ENCODE measurements at regions of chr2 and their contacts with region 1.

Region 1: DNA sequence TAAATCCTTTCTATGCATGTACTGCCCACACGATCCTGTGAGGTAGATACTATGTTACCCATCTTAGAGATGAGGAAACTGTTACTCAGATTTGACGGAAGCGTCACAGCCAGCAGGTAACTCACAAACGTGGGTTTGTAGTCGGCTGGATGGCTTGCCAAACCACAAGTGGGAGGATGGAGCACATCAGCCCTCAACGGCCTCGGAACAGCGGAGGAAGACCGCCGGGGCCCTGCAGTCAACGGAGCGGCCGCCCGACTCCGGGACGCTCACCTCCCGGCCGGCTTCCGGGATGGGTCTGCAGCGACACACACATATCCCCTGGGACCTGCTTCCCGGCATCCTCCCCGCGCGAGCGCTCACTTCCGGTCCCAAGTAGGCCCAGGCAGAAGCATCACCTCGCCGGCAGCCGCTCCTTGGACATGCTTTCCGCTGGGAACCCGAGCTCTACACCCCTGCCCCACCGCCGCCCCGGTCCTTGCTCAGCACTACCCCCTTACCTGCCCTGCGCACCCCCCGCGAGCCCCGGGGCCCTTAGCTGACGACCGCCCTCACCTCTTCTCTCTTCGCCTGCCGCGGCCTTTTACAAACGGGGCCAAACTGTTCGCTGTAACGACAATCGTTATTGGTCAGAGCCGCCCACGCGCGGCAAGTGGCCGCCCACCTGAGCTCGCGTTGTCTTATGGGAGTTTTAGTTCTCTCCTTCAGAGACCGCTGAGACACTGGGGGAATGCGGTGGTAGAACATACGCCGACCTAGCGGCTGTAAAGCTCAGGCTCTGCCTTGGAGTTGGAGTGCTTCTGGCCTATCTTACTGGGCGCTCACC is at the start of gene C2orf42:
- DNase-seq: peak; percentile 93 to 97
- ATAC-seq: peak; percentile 97 to 99 (median 98)
- H3K4me3 ChIP-seq: peak within 1 kb of the TSS; percentile 71 to 91 (median 76)
- H3K27ac ChIP-seq: peak within 1 kb of the TSS; percentile 83 to 95 (median 92)
- H3K4me1 ChIP-seq: peaks cover 0 to 15% (median 4%) of the 10 kb centered on the region in 9 donors
- H3K27me3 ChIP-seq: peaks cover 0 to 3% (median 0%) of the 10 kb centered on the region in 7 donors
- CTCF ChIP-seq: peak in 3 of 9 donors; percentile 17 to 32 (median 25)
- total RNA-seq, gene C2orf42: 7.3 to 15.5 (median 9.7) TPM

Region 2: DNA sequence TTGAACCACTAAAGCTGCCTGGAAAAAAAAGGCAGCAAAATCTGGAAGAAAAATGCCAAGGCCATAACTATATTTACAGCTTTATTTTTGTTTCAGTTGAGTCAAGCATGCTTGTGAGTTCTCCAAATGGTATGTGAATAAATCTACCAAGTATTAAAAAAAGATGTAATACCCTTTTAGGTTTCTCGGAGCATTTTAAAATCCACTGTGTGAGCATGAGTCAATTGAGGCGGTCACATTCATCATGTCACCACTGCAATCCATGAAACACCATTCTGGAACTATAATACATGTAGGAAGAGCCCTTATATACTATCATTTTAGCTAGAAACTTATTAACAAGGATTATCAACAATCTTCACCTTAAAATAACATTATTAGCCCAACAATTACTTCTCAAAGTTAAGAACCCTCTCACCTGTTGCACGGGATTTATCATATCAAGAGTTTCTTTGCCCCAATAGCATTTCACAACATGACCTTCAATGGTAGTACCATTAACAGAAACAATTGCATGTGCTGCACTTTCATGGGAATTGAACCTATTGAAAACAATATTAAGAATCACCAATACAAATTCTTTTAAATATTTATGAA is 24.4 kb after region 1 on chr2:
- intact Hi-C with region 1: loop called in 1 of 10 experiments (anchors 1 kb)
- DNase-seq: no peak
- ATAC-seq: no peak
- H3K4me3 ChIP-seq: no peak overlapping the region
- H3K27ac ChIP-seq: no peak overlapping the region
- H3K4me1 ChIP-seq: peaks cover 0 to 22% (median 3%) of the 10 kb centered on the region in 9 donors
- H3K27me3 ChIP-seq: no peaks in the 10 kb centered on the region
- CTCF ChIP-seq: no peak

Region 3: DNA sequence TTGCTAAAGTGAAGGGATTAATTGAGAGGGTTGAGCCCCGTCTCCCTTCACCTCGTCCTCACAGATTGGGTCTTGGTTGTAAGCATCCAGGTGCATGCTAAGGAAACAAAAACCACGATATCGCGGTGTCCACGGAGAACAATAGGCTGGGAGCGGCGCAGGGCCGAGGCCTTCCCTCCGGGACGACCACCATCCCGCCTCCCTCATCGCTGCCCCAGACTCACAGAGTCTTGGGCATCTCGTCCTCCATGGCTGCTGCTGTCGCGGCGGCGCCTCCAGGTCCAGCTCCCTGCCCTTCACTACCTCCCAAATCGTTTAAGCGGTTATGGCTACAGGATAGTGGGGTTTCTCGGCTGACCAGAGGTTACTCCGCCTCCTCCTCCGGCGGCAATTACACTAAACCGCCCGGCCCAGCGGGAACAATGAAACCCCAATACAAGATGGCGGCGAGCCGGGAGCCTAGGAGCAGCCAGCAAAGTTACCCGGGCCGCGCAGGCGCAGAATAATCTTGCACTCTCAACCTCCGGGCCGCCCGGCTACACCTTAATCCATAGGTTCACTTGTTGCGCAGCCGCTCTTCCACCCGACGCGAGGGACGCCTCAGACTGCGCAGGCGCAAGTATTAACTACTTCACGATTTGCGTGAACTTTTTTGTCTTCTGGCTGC is 57.7 kb after region 1 on chr2 and contains the start of gene TIA1:
- intact Hi-C with region 1: loop called in 3 of 10 experiments (anchors 5 to 10 kb)
- DNase-seq: peak; percentile 98 to 99
- ATAC-seq: peak; percentile 98 to 99 (median 98)
- H3K4me3 ChIP-seq: peak within 1 kb of the TSS; percentile 67 to 93 (median 74)
- H3K27ac ChIP-seq: peak within 1 kb of the TSS; percentile 88 to 99 (median 94)
- H3K4me1 ChIP-seq: peaks cover 14 to 44% (median 38%) of the 10 kb centered on the region in 9 donors
- H3K27me3 ChIP-seq: no peaks in the 10 kb centered on the region
- CTCF ChIP-seq: no peak
- total RNA-seq, gene TIA1: 33.8 to 58.1 (median 43.2) TPM

Measured in heart right ventricle (tissue), 16 donors.